ENCODE measurements at regions of chr2 and their contacts with region 1.

Region 1: DNA sequence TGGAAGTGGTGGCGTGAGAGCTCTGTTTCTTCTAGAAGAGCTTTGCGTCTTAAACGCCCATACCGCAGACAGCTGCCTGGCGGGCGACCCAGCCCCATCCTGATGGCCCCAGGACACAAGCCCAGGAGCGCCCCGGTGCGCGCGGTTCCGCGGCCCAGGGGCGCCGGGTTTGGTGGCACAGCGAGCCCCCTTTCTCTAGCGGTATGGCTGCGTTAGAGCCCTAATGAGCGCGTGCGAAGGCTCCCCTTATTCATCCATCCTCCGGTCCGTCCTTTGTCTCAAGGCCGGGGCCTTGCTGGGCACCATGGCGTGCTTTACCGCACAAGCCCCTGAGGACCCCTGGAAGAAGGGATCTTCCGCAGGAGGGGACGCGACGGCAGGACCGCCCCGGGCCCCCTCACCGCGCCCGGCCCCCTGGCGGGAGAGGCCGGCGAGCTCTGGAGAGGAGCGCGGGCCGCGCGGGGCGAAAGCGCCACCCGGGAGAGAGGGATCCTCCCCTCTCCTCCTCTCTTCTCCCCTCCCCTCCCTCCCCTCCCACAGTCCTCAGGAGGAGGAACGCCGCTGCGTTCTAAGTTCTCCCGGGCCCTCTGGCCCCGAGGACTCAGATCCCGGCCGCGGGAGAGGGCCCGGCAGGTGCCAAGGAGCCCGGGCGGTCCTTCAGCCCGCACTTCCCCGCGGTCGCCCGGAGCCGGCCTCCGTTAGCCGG is 626 bp upstream of the SLC1A4 start:
- DNase-seq: peak; percentile 41
- H3K4me3 Mint-ChIP-seq: peak overlapping the region; percentile 96
- H3K27ac Mint-ChIP-seq: peak overlapping the region; percentile 52
- H3K4me1 Mint-ChIP-seq: peaks cover 47% of the 10 kb centered on the region
- H3K27me3 Mint-ChIP-seq: peaks cover 21% of the 10 kb centered on the region
- CTCF ChIP-seq: peak; percentile 63

Region 2: GRCh38 chr2:64963719-64964118 is 24.9 kb before region 1 on chr2:
- CTCF ChIA-PET with region 1: no interaction called
- intact Hi-C with region 1: no loop called
- DNase-seq: no peak
- H3K4me3 Mint-ChIP-seq: no peak overlapping the region
- H3K27ac Mint-ChIP-seq: no peak overlapping the region
- H3K4me1 Mint-ChIP-seq: no peaks in the 10 kb centered on the region
- H3K27me3 Mint-ChIP-seq: peaks cover 10% of the 10 kb centered on the region
- CTCF ChIP-seq: no peak

Region 3: GRCh38 chr2:65015731-65016130 is 27.2 kb after region 1 on chr2:
- CTCF ChIA-PET with region 1: interaction called, 12 read pairs
- intact Hi-C with region 1: no loop called
- DNase-seq: no peak
- H3K4me3 Mint-ChIP-seq: no peak overlapping the region
- H3K27ac Mint-ChIP-seq: no peak overlapping the region
- H3K4me1 Mint-ChIP-seq: no peaks in the 10 kb centered on the region
- H3K27me3 Mint-ChIP-seq: no peaks in the 10 kb centered on the region
- CTCF ChIP-seq: no peak